Heart right ventricle (tissue), 16 donors: ENCODE measurements at regions of chr4 and their contacts with region 1.

Region 1: DNA sequence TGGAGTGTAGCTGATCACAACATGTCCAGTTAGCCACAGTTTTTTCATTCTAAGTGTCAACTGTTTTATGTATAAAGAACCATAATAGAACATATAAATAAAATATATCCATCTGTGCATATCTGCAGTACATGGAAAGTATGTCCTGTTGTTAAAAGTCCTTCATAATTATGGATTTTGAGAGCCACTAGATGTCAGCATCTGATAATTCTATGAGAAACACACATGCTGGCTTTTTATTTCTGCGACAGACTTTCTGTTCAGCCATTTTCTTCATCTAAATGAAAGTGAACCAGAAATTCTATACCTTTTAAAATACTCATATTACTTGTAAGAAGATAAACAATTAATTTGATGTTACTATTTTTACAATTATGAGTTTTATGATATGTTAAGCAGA is 251.5 kb downstream of the GPM6A start:
- DNase-seq: no peak
- ATAC-seq: no peak
- H3K4me3 ChIP-seq: no peak overlapping the region
- H3K27ac ChIP-seq: no peak overlapping the region
- H3K4me1 ChIP-seq: no peaks in the 10 kb centered on the region
- H3K27me3 ChIP-seq: no peaks in the 10 kb centered on the region
- CTCF ChIP-seq: peak in 5 of 9 donors; percentile 28 to 54 (median 41)

Region 2: GRCh38 chr4:175891851-175892250 is 331.2 kb after region 1 on chr4:
- intact Hi-C with region 1: loop called in 4 of 10 experiments (anchors 10 kb)
- DNase-seq: no peak
- ATAC-seq: no peak
- H3K4me3 ChIP-seq: no peak overlapping the region
- H3K27ac ChIP-seq: no peak overlapping the region
- H3K4me1 ChIP-seq: no peaks in the 10 kb centered on the region
- H3K27me3 ChIP-seq: no peaks in the 10 kb centered on the region
- CTCF ChIP-seq: peak in 5 of 9 donors; percentile 30 to 54 (median 37)